Upper lobe of right lung (tissue), 1 donor: ENCODE measurements at regions of chr1 and their contacts with region 1.

Region 1: DNA sequence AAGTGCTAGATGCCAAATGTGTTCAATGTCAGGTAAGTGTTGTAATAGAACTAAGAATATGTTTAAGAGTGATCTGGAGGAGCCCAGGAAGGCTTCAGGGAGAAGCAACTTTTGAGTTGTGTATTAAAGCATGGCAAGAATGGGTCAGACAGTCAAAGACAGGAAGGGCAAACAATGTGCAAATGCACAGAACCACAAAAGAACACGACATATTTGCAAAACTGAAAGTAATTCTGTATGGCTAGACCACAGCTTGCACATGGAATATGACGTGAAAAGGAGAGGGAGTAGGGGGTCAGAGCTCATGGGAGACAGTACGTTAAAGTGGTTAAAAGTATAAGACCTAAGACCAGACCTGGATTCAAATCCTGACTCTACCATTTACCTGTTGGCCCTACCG is 7.1 kb upstream of the SORT1 start:
- DNase-seq: no peak
- ATAC-seq: no peak
- H3K4me3 ChIP-seq: no peak overlapping the region
- H3K27ac ChIP-seq: no peak overlapping the region
- H3K4me1 ChIP-seq: no peaks in the 10 kb centered on the region
- H3K27me3 ChIP-seq: no peaks in the 10 kb centered on the region
- CTCF ChIP-seq: no peak

Region 2: DNA sequence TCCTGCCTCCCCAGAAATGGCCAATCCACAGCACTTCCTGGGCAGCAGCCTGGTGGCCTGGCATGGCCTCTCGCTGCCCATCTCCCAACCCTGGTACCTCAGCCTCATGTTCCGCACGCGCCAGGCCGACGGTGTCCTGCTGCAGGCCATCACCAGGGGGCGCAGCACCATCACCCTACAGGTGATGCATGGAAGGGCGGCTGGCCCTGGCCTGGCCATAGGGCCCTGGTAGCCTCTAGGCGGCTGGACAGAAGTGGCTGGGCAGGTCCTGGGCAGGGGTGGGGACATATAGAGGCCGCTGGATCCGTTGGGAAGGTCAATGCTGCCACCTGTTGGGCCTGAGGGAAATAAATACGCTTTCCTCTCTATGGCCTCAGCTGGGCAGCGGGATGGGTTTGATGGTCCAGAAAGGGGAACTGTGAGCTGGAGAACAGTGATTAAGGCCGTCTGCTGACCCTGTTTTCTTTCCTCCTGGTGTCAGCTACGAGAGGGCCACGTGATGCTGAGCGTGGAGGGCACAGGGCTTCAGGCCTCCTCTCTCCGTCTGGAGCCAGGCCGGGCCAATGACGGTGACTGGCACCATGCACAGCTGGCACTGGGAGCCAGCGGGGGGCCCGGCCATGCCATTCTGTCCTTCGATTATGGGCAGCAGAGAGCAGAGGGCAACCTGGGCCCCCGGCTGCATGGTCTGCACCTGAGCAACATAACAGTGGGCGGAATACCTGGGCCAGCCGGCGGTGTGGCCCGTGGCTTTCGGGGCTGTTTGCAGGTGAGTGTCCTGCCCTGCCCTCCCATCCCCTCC is 141.0 kb before region 1 on chr1:
- intact Hi-C with region 1: loop called (anchors 5 kb)
- DNase-seq: peak; percentile 97
- ATAC-seq: peak; percentile 98
- H3K4me3 ChIP-seq: no peak overlapping the region
- H3K27ac ChIP-seq: no peak overlapping the region
- H3K4me1 ChIP-seq: peaks cover 7% of the 10 kb centered on the region
- H3K27me3 ChIP-seq: no peaks in the 10 kb centered on the region
- CTCF ChIP-seq: peak; percentile 97